A673 (cell line): ENCODE measurements at regions of chr11 and their contacts with region 1.

Region 1: DNA sequence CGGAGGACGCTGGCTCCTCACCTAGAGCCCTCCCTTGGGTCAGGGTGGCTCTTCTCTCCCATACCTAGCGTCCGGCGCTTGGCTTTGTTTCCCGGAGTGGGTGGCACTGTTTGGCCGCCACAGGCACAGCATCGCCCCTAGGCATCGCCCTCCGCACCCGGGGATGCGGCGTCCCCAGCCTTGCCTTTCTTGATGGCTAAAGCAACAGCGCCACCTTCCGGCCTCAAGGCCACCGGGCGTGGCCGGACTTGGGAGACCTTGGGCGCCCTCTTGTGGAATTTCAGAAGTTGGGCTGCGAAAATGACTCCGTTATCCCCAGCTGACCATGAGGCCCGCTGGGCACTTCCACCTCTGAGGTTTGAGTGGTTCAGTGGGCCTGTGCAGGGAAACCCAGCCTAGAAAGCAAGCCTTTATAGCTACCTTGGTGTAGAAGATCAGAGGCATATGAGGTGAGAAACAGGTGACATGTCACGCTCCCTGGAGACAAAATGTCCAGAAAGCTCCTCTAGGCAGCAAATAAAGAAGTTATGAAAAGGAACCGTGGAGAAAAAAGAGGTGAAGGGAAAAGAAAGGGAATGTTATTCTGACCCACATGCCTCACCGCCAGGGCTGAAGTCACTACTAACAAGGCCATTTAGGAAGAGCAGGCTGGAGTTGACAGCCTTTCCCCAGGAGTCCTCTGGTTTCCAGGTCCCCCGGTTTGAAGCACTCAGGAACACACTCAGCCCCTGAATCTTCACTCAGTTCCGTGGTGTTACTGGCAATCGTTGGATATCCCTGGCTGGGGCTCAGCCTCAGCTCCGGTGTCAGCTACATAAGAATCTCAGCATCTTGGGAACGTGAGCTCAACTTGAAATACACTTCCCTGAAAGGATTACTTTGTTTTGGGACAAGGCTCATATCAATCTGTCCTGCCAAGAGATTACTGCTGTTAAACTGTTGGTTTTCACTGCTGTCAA is 54.1 kb downstream of the SNX19 start:
- DNase-seq: peak; percentile 96
- H3K4me3 ChIP-seq: no peak overlapping the region
- H3K27ac ChIP-seq: no peak overlapping the region
- H3K4me1 ChIP-seq: no peaks in the 10 kb centered on the region
- H3K27me3 ChIP-seq: no peaks in the 10 kb centered on the region
- CTCF ChIP-seq: peak; percentile 100

Region 2: GRCh38 chr11:130218501-130219070 is 643.6 kb before region 1 on chr11:
- CTCF ChIA-PET with region 1: no interaction called
- POLR2A ChIA-PET with region 1: no interaction called
- intact Hi-C with region 1: loop called (anchors 2 kb)
- DNase-seq: no peak
- H3K4me3 ChIP-seq: no peak overlapping the region
- H3K27ac ChIP-seq: no peak overlapping the region
- H3K4me1 ChIP-seq: no peaks in the 10 kb centered on the region
- H3K27me3 ChIP-seq: no peaks in the 10 kb centered on the region
- CTCF ChIP-seq: no peak

Region 3: DNA sequence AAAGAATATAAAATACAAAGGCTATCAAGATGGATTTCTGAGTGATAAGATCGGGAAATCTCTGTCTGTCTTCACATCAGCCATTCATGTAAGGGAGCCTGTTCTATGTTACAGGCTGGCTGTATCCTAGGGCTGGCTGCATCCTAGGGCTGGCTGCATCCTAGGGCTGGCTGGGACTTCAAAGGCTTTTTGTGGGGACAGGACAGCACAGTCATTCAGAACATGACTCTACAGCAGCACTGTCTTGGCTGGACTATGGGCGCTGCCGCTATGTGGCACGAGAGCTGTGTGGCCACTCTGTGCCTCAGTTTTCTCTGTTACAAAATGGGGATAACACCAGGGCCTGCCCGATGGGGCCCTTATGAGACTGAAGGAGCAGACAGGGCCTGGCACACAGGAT is 444.0 kb before region 1 on chr11:
- CTCF ChIA-PET with region 1: interaction called, 11 read pairs
- POLR2A ChIA-PET with region 1: no interaction called
- intact Hi-C with region 1: no loop called
- DNase-seq: no peak
- H3K4me3 ChIP-seq: no peak overlapping the region
- H3K27ac ChIP-seq: no peak overlapping the region
- H3K4me1 ChIP-seq: no peaks in the 10 kb centered on the region
- H3K27me3 ChIP-seq: peaks cover 49% of the 10 kb centered on the region
- CTCF ChIP-seq: no peak

Region 4: GRCh38 chr11:130671801-130672700 is 190.1 kb before region 1 on chr11:
- CTCF ChIA-PET with region 1: no interaction called
- POLR2A ChIA-PET with region 1: no interaction called
- intact Hi-C with region 1: no loop called
- DNase-seq: peak; percentile 16
- H3K4me3 ChIP-seq: no peak overlapping the region
- H3K27ac ChIP-seq: no peak overlapping the region
- H3K4me1 ChIP-seq: no peaks in the 10 kb centered on the region
- H3K27me3 ChIP-seq: no peaks in the 10 kb centered on the region
- CTCF ChIP-seq: no peak